ENCODE measurements at regions of chr2 and their contacts with region 1.

Region 1: DNA sequence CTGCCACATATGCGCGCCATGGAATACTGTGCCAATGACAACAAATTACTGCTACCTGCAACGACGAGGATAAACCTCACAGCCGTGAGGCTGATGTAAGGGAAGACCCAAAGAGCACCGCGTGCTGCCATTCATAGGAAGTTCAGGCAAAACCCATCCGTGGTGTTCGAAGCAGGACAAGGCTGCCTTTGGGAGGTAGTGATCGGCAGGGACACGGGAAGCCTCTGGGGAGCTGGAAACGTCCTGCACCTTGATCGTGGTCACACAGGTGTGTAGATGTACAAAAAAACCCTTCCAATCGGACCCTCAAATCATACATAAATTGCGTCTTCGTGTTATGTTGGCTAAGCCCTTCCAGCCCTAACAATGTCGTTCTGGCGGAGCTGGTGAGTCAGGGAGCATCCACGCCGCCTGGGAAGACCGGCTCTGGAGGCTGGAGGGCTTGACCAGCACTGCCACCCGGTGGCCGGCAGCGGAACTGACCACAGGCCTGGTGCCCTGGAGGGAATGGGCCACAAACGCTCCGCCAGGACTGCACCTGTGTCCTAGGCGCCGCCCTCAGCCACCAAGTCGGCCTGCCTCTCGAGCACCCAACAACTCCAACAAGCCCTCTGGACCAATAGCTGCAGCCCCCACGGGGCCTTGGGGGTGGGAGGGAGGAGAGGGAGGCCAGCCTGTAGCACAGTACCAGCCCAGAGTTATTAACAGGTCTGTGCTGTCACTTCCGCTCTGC is 4.1 kb upstream of the NEURL3 start:
- DNase-seq: peak; percentile 86 to 94 (median 91)
- H3K4me3 ChIP-seq: no peak overlapping the region
- H3K27ac ChIP-seq: no peak overlapping the region
- H3K4me1 ChIP-seq: peaks cover 3 to 9% of the 10 kb centered on the region in 2 donors
- H3K27me3 ChIP-seq: peaks cover 4% of the 10 kb centered on the region
- CTCF ChIP-seq: peak; percentile 95 to 99 (median 98)
- POLR2A ChIP-seq: no peak

Region 2: DNA sequence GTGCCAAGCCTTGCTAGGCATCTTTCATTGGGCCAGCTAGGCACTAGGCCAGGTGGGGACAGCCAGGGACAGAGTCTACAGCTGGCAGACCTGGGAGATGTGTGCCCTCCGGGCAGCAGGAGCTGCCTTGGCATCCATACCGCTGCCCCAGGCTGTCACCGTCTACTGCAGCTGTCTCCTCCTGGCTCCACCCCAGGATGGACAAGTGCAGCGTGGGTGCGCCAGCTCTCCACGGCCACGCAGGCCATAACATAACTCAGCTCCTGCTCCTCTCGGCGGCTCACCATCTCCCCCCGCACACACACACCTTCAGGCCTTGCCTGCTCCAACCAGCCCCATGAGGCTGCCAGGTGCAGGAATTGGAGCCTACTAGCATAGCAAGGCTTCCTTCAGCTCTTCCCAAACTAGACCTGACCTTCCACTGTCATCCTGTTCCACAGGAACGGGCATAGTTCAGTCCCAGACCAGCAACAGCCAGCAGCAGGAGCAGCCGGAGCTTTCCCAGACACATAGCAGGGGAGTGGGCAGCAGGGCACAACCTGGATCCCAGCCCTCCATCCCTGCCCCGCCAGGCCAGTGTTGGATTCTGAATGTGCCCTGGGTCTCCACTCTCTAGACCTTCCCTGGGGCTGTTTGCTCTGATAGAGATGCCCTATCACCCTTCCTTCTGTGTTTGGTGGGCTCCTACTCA is 390.4 kb before region 1 on chr2:
- intact Hi-C with region 1: no loop called
- DNase-seq: no peak
- H3K4me3 ChIP-seq: no peak overlapping the region
- H3K27ac ChIP-seq: no peak overlapping the region
- H3K4me1 ChIP-seq: peaks cover 7 to 8% of the 10 kb centered on the region in 2 donors
- H3K27me3 ChIP-seq: peaks cover 23% of the 10 kb centered on the region
- CTCF ChIP-seq: no peak
- POLR2A ChIP-seq: no peak

Region 3: GRCh38 chr2:96315400-96316071 is 193.7 kb before region 1 on chr2:
- intact Hi-C with region 1: loop called in 1 of 2 experiments (anchors 10 kb)
- DNase-seq: no peak
- H3K4me3 ChIP-seq: no peak overlapping the region
- H3K27ac ChIP-seq: no peak overlapping the region
- H3K4me1 ChIP-seq: no peaks in the 10 kb centered on the region
- H3K27me3 ChIP-seq: peaks cover 14% of the 10 kb centered on the region
- CTCF ChIP-seq: no peak
- POLR2A ChIP-seq: no peak

Region 4: GRCh38 chr2:96389736-96390135 is 119.5 kb before region 1 on chr2:
- intact Hi-C with region 1: no loop called
- DNase-seq: peak in 2 of 7 donors; percentile 9 to 30
- H3K4me3 ChIP-seq: no peak overlapping the region
- H3K27ac ChIP-seq: no peak overlapping the region
- H3K4me1 ChIP-seq: no peaks in the 10 kb centered on the region
- H3K27me3 ChIP-seq: no peaks in the 10 kb centered on the region
- CTCF ChIP-seq: no peak
- POLR2A ChIP-seq: no peak

Region 5: GRCh38 chr2:96407041-96407918 is 102.0 kb before region 1 on chr2:
- intact Hi-C with region 1: loop called (anchors 2 to 5 kb)
- DNase-seq: peak; percentile 48 to 77 (median 73)
- H3K4me3 ChIP-seq: no peak overlapping the region
- H3K27ac ChIP-seq: no peak overlapping the region
- H3K4me1 ChIP-seq: peaks cover 0 to 6% of the 10 kb centered on the region in 2 donors
- H3K27me3 ChIP-seq: no peaks in the 10 kb centered on the region
- CTCF ChIP-seq: peak; percentile 62 to 89 (median 79)
- POLR2A ChIP-seq: no peak

Region 6: DNA sequence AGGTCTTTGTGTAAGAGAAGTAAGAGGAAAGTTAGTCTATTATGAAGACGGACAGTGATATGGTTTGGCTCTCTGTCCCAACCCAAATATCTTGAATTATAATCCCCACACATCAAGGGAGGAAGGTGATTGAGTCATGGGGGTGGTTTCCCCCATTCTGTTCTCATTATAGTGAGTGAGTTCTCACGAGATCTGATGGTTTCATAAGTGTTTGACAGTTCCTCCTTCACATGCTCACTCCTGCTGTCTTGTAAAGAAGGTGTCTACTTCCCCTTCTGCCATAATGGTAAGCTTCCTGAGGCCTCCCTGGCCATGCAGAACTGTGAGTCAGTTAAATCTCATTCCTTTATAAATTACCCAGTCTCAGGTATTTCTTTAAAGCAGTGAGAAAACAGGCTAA is 71.8 kb before region 1 on chr2:
- intact Hi-C with region 1: no loop called
- DNase-seq: no peak
- H3K4me3 ChIP-seq: no peak overlapping the region
- H3K27ac ChIP-seq: no peak overlapping the region
- H3K4me1 ChIP-seq: no peaks in the 10 kb centered on the region
- H3K27me3 ChIP-seq: no peaks in the 10 kb centered on the region
- CTCF ChIP-seq: no peak
- POLR2A ChIP-seq: no peak

Region 7: GRCh38 chr2:96470636-96471035 is 38.6 kb before region 1 on chr2:
- intact Hi-C with region 1: loop called in 1 of 2 experiments (anchors 5 kb)
- DNase-seq: peak; percentile 42 to 64 (median 57)
- H3K4me3 ChIP-seq: peak overlapping the region in 1 of 4 donors; percentile 46
- H3K27ac ChIP-seq: no peak overlapping the region
- H3K4me1 ChIP-seq: peaks cover 0 to 8% of the 10 kb centered on the region in 2 donors
- H3K27me3 ChIP-seq: no peaks in the 10 kb centered on the region
- CTCF ChIP-seq: peak; percentile 24 to 58 (median 51)
- POLR2A ChIP-seq: no peak

Region 8: GRCh38 chr2:96498023-96498431 is 11.3 kb before region 1 on chr2:
- intact Hi-C with region 1: no loop called
- DNase-seq: no peak
- H3K4me3 ChIP-seq: no peak overlapping the region
- H3K27ac ChIP-seq: no peak overlapping the region
- H3K4me1 ChIP-seq: no peaks in the 10 kb centered on the region
- H3K27me3 ChIP-seq: peaks cover 10% of the 10 kb centered on the region
- CTCF ChIP-seq: no peak
- POLR2A ChIP-seq: no peak